ENCODE measurements at regions of chr11 and their contacts with region 1.

Region 1: GRCh38 chr11:2151500-2152257 is 9.3 kb downstream of the INS start:
- DNase-seq: peak; percentile 73 to 89
- ATAC-seq: peak; percentile 66 to 83 (median 76)
- H3K4me3 ChIP-seq: no peak overlapping the region
- H3K27ac ChIP-seq: no peak overlapping the region
- H3K4me1 ChIP-seq: peaks cover 13% of the 10 kb centered on the region
- H3K27me3 ChIP-seq: peaks cover 0 to 17% (median 2%) of the 10 kb centered on the region in 3 donors
- CTCF ChIP-seq: peak; percentile 85

Region 2: GRCh38 chr11:1652771-1653540 is 498.7 kb before region 1 on chr11:
- intact Hi-C with region 1: loop called in 1 of 2 experiments (anchors 2 kb)
- DNase-seq: peak; percentile 77 to 87
- ATAC-seq: peak; percentile 79 to 95 (median 92)
- H3K4me3 ChIP-seq: no peak overlapping the region
- H3K27ac ChIP-seq: no peak overlapping the region
- H3K4me1 ChIP-seq: no peaks in the 10 kb centered on the region
- H3K27me3 ChIP-seq: peaks cover 0 to 3% (median 2%) of the 10 kb centered on the region in 3 donors
- CTCF ChIP-seq: peak; percentile 98

Region 3: GRCh38 chr11:1694064-1694845 is 457.4 kb before region 1 on chr11:
- intact Hi-C with region 1: loop called (anchors 1 to 5 kb)
- DNase-seq: peak; percentile 88 to 94
- ATAC-seq: peak; percentile 96 to 99 (median 98)
- H3K4me3 ChIP-seq: peak overlapping the region; percentile 35
- H3K27ac ChIP-seq: no peak overlapping the region
- H3K4me1 ChIP-seq: peaks cover 6% of the 10 kb centered on the region
- H3K27me3 ChIP-seq: peaks cover 0 to 4% (median 0%) of the 10 kb centered on the region in 3 donors
- CTCF ChIP-seq: peak; percentile 93

Region 4: DNA sequence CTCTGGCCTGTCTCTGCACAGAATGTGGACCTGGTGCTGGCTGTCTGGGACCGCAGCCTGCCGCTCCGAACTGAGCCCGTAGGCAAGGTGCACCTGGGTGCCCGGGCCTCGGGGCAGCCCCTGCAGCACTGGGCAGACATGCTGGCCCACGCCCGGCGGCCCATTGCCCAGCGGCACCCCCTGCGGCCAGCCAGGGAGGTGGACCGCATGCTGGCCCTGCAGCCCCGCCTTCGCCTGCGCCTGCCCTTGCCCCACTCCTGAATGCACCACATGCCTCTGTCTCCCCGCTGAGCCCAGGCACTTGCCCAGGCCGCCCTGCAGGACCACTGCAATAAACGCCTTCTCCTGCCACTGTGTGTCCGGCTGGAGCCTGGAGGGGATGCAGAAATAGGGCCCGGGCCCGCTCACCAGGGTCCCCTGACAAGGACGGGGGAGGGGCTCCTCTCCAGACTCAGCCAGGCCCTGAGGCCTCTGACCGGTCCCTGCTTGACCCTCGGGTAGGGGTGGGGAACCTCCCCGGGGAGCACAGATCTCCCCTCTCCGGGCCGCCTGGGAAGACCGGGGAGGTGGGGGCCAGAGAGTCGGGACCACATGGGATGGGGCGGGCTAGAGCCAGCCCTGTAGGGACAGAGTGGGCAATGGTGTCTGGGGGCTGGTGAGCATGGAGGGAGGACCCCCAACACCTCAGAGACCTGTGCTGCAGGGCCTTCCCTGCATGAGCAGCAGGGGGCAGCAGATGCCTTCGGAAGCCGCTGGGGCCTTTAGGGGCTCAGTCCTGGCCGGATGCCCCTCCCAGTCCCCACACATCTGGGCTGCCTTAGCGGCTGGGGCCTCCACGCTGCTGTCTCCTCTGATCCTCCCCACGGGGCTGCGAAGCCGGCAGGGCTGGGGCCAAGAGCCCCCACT is 314.3 kb before region 1 on chr11:
- intact Hi-C with region 1: loop called (anchors 2 to 5 kb)
- DNase-seq: peak; percentile 75 to 90
- ATAC-seq: peak; percentile 34 to 60 (median 48)
- H3K4me3 ChIP-seq: peak overlapping the region; percentile 28
- H3K27ac ChIP-seq: peak overlapping the region; percentile 93
- H3K4me1 ChIP-seq: peaks cover 11% of the 10 kb centered on the region
- H3K27me3 ChIP-seq: no peaks in the 10 kb centered on the region
- CTCF ChIP-seq: peak; percentile 88

Region 5: GRCh38 chr11:1882519-1883238 is 269.0 kb before region 1 on chr11:
- intact Hi-C with region 1: loop called in 1 of 2 experiments (anchors 5 kb)
- DNase-seq: peak; percentile 85 to 93
- ATAC-seq: peak; percentile 86 to 94 (median 92)
- H3K4me3 ChIP-seq: no peak overlapping the region
- H3K27ac ChIP-seq: peak overlapping the region; percentile 84
- H3K4me1 ChIP-seq: peaks cover 20% of the 10 kb centered on the region
- H3K27me3 ChIP-seq: no peaks in the 10 kb centered on the region
- CTCF ChIP-seq: peak; percentile 94

Region 6: DNA sequence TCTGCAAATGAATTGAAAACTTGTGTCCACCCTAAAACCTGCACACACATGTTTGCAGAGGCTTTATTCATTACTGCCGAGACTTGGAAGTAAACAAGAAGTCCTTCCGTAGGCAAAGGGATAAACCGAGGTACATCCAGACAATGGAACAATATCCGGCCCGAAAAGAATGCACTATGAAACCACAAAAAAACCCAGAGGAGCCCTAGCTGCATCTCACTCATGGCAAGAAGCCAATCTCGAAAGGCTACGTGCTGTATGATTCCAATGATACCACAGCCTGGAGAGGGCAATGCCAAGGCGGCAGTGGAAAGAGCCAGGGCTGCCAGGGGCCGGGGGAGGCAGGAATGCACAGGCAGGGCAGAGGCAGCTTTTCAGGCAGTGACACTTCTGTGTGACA is 207.7 kb before region 1 on chr11:
- intact Hi-C with region 1: loop called in 1 of 2 experiments (anchors 5 kb)
- DNase-seq: peak in 1 of 2 donors; percentile 41
- ATAC-seq: no peak
- H3K4me3 ChIP-seq: no peak overlapping the region
- H3K27ac ChIP-seq: no peak overlapping the region
- H3K4me1 ChIP-seq: no peaks in the 10 kb centered on the region
- H3K27me3 ChIP-seq: no peaks in the 10 kb centered on the region
- CTCF ChIP-seq: no peak

Region 7: DNA sequence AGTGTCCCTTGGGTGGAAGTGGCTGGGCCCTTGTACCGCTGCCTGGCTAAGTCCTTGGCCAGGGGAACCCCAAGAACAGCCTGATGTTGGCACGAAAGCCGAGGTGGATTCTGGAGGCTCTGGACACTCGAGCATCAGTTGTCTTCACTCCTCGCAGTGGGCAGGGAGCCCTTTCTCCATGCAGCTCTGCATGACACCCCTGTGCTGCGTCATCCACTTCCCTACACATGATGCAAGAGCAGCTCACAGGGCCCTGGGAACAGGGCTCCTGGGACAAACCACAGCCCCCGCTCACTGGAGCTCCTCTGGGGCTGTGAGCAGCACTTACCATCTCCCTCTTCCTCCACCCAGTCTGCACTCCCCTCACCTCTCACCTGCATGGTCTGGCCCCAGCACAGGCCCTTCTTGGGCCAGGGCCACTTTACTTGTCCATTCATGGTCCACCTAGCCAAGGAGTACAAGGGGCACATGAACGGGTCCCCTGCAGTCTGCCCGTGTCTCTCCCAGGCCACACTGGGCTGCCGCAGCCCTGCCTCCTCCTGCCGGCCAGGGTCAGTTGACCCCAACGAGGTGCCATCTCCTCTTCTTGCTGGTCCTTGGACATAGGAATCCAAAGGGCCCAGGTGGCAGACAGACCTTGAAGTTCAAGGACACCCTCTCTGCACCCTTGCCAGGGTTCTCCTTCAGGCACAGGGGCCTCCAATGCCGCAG is 79.0 kb before region 1 on chr11:
- intact Hi-C with region 1: no loop called
- DNase-seq: no peak
- ATAC-seq: no peak
- H3K4me3 ChIP-seq: no peak overlapping the region
- H3K27ac ChIP-seq: no peak overlapping the region
- H3K4me1 ChIP-seq: no peaks in the 10 kb centered on the region
- H3K27me3 ChIP-seq: peaks cover 0 to 27% (median 2%) of the 10 kb centered on the region in 3 donors
- CTCF ChIP-seq: no peak

Region 8: GRCh38 chr11:2092956-2093412 is 58.7 kb before region 1 on chr11:
- intact Hi-C with region 1: loop called in 1 of 2 experiments (anchors 5 kb)
- DNase-seq: peak; percentile 88 to 97
- ATAC-seq: peak; percentile 84 to 95 (median 91)
- H3K4me3 ChIP-seq: no peak overlapping the region
- H3K27ac ChIP-seq: peak overlapping the region; percentile 49
- H3K4me1 ChIP-seq: peaks cover 24% of the 10 kb centered on the region
- H3K27me3 ChIP-seq: no peaks in the 10 kb centered on the region
- CTCF ChIP-seq: no peak